Activated naive CD4-positive, alpha-beta T cell treated with anti-CD3 and anti-CD28 coated beads for 36 hours (primary cell): ENCODE measurements at regions of chr20 and their contacts with region 1.

Region 1: GRCh38 chr20:24694727-24695597 is 225.5 kb downstream of the SYNDIG1 start:
- DNase-seq: no peak
- H3K4me3 Mint-ChIP-seq: no peak overlapping the region
- H3K27ac Mint-ChIP-seq: no peak overlapping the region
- H3K4me1 Mint-ChIP-seq: no peaks in the 10 kb centered on the region
- H3K27me3 Mint-ChIP-seq: peaks cover 4% of the 10 kb centered on the region

Region 2: DNA sequence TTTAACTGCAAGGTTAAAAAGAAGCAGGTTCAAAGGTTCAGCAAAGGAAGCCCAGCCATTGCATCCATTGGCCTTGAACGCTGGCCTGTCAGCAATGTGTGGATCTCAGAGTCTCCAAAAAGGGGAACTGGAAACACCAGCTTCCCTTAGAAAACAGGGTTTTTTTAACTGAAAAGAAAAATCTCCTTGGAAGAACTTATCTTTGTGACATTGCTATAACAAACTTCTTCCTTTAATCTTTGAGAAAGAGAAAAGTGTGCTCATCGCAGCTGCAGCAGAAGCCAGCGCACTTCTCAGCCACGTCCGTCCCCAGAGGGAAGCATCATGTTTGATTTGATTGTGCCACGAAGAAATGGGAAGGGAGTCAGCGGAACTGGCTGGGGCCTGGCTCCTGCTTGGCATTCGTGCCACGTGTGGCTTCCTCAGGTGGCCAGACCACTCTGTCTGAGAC is 10.5 kb before region 1 on chr20:
- CTCF ChIA-PET with region 1: no interaction called
- intact Hi-C with region 1: no loop called
- DNase-seq: no peak
- H3K4me3 Mint-ChIP-seq: no peak overlapping the region
- H3K27ac Mint-ChIP-seq: no peak overlapping the region
- H3K4me1 Mint-ChIP-seq: no peaks in the 10 kb centered on the region
- H3K27me3 Mint-ChIP-seq: no peaks in the 10 kb centered on the region

Region 3: GRCh38 chr20:24755411-24755922 is 60.5 kb after region 1 on chr20:
- CTCF ChIA-PET with region 1: no interaction called
- intact Hi-C with region 1: loop called (anchors 10 kb)
- DNase-seq: no peak
- H3K4me3 Mint-ChIP-seq: no peak overlapping the region
- H3K27ac Mint-ChIP-seq: no peak overlapping the region
- H3K4me1 Mint-ChIP-seq: peaks cover 4% of the 10 kb centered on the region
- H3K27me3 Mint-ChIP-seq: peaks cover 3% of the 10 kb centered on the region